PC-9 (cell line): ENCODE measurements at regions of chr3 and their contacts with region 1.

Region 1: GRCh38 chr3:57832900-57833313 is 76.8 kb downstream of the SLMAP start:
- DNase-seq: no peak
- H3K4me3 ChIP-seq: no peak overlapping the region
- H3K27ac ChIP-seq: no peak overlapping the region
- H3K4me1 ChIP-seq: peaks cover 4% of the 10 kb centered on the region
- H3K27me3 ChIP-seq: no peaks in the 10 kb centered on the region
- CTCF ChIP-seq: no peak

Region 2: GRCh38 chr3:56851966-56852884 is 980.7 kb before region 1 on chr3:
- CTCF ChIA-PET with region 1: no interaction called
- POLR2A ChIA-PET with region 1: no interaction called
- intact Hi-C with region 1: no loop called
- DNase-seq: peak; percentile 34 to 71
- H3K4me3 ChIP-seq: no peak overlapping the region
- H3K27ac ChIP-seq: peak overlapping the region; percentile 79
- H3K4me1 ChIP-seq: peaks cover 33% of the 10 kb centered on the region
- H3K27me3 ChIP-seq: no peaks in the 10 kb centered on the region
- CTCF ChIP-seq: no peak

Region 3: GRCh38 chr3:57309769-57310360 is 523.0 kb before region 1 on chr3:
- CTCF ChIA-PET with region 1: interaction called, 10 read pairs
- POLR2A ChIA-PET with region 1: no interaction called
- intact Hi-C with region 1: no loop called
- DNase-seq: no peak
- H3K4me3 ChIP-seq: no peak overlapping the region
- H3K27ac ChIP-seq: no peak overlapping the region
- H3K4me1 ChIP-seq: no peaks in the 10 kb centered on the region
- H3K27me3 ChIP-seq: no peaks in the 10 kb centered on the region
- CTCF ChIP-seq: no peak

Region 4: DNA sequence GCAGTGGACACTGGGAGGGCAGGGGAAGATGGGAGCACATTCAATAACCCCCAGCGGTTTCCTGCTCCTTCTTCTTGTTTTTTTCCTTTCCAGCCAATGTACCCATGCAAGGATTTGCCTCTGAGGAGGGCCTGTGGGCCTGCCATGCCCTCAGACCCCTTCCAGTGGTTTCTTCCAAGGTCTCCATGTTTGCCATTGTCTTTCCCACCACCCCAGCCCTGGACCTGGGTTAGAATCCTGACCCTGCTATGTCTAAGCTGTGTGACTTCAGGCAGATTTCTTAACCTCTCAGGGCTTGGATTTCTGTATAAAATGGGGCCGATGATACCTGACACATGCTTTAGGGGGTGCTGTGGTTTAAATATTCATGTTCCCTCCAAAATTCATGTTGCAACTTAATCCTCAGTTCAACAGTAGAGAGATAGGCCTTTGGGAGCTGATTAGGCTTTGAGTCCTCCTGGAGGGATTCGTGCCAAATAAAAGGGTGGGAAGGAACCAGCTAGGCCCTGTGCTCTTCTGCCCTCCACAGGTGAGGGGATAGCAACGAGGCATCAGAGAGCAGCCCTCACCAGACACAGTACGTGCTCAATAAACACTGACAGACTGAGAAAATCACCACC is 129.0 kb after region 1 on chr3:
- CTCF ChIA-PET with region 1: no interaction called
- POLR2A ChIA-PET with region 1: no interaction called
- intact Hi-C with region 1: no loop called
- DNase-seq: peak in 1 of 2 experiments; percentile 41
- H3K4me3 ChIP-seq: no peak overlapping the region
- H3K27ac ChIP-seq: 0 out of 2 replicates have a peak overlapping the region, but pooled peaks have one; percentile 7
- H3K4me1 ChIP-seq: peaks cover 34% of the 10 kb centered on the region
- H3K27me3 ChIP-seq: no peaks in the 10 kb centered on the region
- CTCF ChIP-seq: peak; percentile 67

Region 5: DNA sequence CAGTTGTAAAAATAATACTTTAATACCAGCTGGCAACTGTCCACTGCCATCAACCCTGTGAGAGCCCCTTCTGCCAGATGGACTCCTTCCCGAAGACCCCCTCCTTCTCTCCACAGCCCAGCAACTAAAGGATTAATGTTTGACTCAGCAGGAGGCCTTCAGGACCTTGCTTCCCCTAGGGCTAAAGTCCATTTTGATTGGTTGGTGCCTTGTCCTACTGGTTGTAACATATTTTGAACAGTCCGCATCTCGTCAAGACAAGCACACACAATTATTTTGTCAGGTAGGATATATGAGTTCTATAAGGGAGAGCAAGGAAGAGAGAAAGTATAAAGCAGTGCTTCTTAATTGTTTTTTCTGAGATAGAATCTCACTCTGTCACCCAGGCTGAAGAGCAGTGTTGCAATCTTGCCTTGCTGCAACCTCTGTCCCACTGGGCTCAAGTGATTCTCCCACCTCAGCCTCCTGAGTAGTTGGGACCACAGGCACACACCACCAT is 685.4 kb after region 1 on chr3:
- CTCF ChIA-PET with region 1: no interaction called
- POLR2A ChIA-PET with region 1: no interaction called
- intact Hi-C with region 1: no loop called
- DNase-seq: no peak
- H3K4me3 ChIP-seq: no peak overlapping the region
- H3K27ac ChIP-seq: no peak overlapping the region
- H3K4me1 ChIP-seq: peaks cover 4% of the 10 kb centered on the region; the same call in 1 of the 2 replicates
- H3K27me3 ChIP-seq: no peaks in the 10 kb centered on the region
- CTCF ChIP-seq: no peak